K562 (cell line): ENCODE measurements at regions of chr1 and their contacts with region 1.

Region 1: GRCh38 chr1:42576935-42577334 is 81.3 kb upstream of the PPIH start:
- DNase-seq: no peak
- ATAC-seq: no peak
- H3K4me3 ChIP-seq: no peak overlapping the region
- H3K27ac ChIP-seq: no peak overlapping the region
- H3K4me1 ChIP-seq: no peaks in the 10 kb centered on the region
- H3K27me3 ChIP-seq: peaks cover 2 to 4% of the 10 kb centered on the region in 2 experiments; a peak in 1 of 5 replicates
- CTCF ChIP-seq: no peak
- EP300 ChIP-seq: no peak
- POLR2A ChIP-seq: no peak
- RAD21 ChIP-seq: no peak

Region 2: DNA sequence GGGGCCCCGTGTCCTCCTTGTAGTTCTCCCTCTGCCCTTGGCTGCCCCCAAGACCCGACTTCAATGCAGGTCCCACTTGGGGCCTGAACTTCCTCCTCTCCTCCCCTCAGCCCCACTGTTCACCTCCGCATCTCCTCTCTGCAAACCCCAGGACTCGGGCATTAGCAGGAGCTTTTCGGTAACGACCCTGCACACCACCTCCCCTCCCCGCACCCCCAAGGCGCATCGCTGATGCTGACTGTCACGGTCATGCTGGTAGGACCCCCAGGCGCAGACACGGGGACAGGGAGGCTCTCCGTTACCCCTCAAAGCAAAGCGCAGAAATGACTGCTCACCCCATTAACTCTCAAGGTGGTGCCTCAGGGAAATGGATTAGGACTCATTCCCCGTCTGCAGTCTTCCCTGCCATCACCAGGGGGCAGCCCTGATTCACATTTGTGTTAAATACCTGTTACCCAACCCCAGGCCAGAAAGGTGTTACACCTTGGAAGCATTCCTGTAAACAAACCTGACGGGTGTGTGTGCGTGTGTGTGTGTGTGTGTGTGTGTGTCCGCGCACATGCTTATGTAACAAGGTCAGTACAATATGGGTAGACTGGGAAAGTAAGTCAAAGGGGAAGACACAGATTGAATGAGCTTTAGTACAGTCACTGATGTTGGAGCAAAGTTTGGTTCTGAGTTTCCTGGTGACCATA is 430.2 kb before region 1 on chr1:
- CTCF ChIA-PET with region 1: no interaction called
- POLR2A ChIA-PET with region 1: no interaction called
- in situ Hi-C with region 1: no loop called
- intact Hi-C with region 1: loop called (anchors 5 kb)
- DNase-seq: peak; percentile 75 to 79 (median 76)
- ATAC-seq: peak; percentile 94
- H3K4me3 ChIP-seq: no peak overlapping the region
- H3K27ac ChIP-seq: no peak overlapping the region
- H3K4me1 ChIP-seq: peaks cover 0 to 4% of the 10 kb centered on the region in 2 experiments; a peak in 1 of 5 replicates
- H3K27me3 ChIP-seq: peaks cover 21 to 60% of the 10 kb centered on the region in 2 experiments
- CTCF ChIP-seq: peak; percentile 80 to 95 (median 91)
- EP300 ChIP-seq: no peak
- POLR2A ChIP-seq: no peak
- RAD21 ChIP-seq: peak; percentile 73 to 95

Region 3: DNA sequence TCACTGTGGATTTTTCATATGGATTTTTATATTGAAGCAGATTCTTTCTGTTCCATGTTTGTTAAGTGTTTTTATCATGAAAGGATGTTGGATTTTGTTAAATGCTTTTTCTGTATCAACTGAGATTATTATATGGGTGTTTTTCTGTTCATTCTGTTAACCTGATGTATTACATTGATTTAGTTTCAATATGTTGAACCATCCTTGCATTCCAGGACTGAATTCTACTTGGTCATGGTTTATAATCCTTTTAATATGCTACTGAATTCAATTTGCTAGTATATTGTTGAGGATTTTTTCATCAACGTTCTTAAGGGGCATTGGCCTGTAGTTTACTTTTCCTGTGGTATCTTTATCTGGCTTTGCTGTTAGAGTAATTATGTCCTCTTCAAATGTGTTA is 58.0 kb before region 1 on chr1:
- CTCF ChIA-PET with region 1: no interaction called
- POLR2A ChIA-PET with region 1: no interaction called
- in situ Hi-C with region 1: no loop called
- intact Hi-C with region 1: loop called (anchors 5 kb)
- DNase-seq: no peak
- ATAC-seq: no peak
- H3K4me3 ChIP-seq: no peak overlapping the region
- H3K27ac ChIP-seq: no peak overlapping the region
- H3K4me1 ChIP-seq: no peaks in the 10 kb centered on the region
- H3K27me3 ChIP-seq: no peaks in the 10 kb centered on the region
- CTCF ChIP-seq: no peak
- EP300 ChIP-seq: no peak
- POLR2A ChIP-seq: no peak
- RAD21 ChIP-seq: no peak

Region 4: GRCh38 chr1:42747125-42747524 is 170.2 kb after region 1 on chr1:
- CTCF ChIA-PET with region 1: interaction called, 10 read pairs
- POLR2A ChIA-PET with region 1: no interaction called
- in situ Hi-C with region 1: loop called (anchors 25 kb)
- intact Hi-C with region 1: no loop called
- DNase-seq: peak; percentile 43 to 55 (median 52)
- ATAC-seq: peak; percentile 73
- H3K4me3 ChIP-seq: no peak overlapping the region
- H3K27ac ChIP-seq: no peak overlapping the region
- H3K4me1 ChIP-seq: no peaks in the 10 kb centered on the region
- H3K27me3 ChIP-seq: peaks cover 0 to 5% of the 10 kb centered on the region in 2 experiments; a peak in 1 of 5 replicates
- CTCF ChIP-seq: peak; percentile 70 to 82 (median 74)
- EP300 ChIP-seq: no peak
- POLR2A ChIP-seq: no peak
- RAD21 ChIP-seq: peak; percentile 52 to 76

Region 5: GRCh38 chr1:42766741-42767509 is 190.0 kb after region 1 on chr1 and contains the starts of genes C1orf50 and P3H1:
- CTCF ChIA-PET with region 1: no interaction called
- POLR2A ChIA-PET with region 1: no interaction called
- in situ Hi-C with region 1: no loop called
- intact Hi-C with region 1: loop called (anchors 2 kb)
- DNase-seq: peak; percentile 96 to 100 (median 96)
- ATAC-seq: peak; percentile 93
- H3K4me3 ChIP-seq: peak within 1 kb of the TSS; percentile 76
- H3K27ac ChIP-seq: peak within 1 kb of the TSS; percentile 81
- H3K4me1 ChIP-seq: peaks cover 12 to 24% of the 10 kb centered on the region in 2 experiments; a peak in 3 of 5 replicates
- H3K27me3 ChIP-seq: no peaks in the 10 kb centered on the region
- CTCF ChIP-seq: peak in 1 of 3 experiments; percentile 10; a peak in 2 of 6 replicates
- EP300 ChIP-seq: no peak; the same call in 1 of the 2 replicates
- POLR2A ChIP-seq: peak; percentile 98
- RAD21 ChIP-seq: no peak
- polyA plus RNA-seq, gene C1orf50: 0.55 to 1.8 TPM
- polyA plus RNA-seq, gene P3H1: 1.7 to 5.0 TPM

Region 6: GRCh38 chr1:43073490-43074230 is 496.7 kb after region 1 on chr1:
- CTCF ChIA-PET with region 1: interaction called, 8 read pairs
- POLR2A ChIA-PET with region 1: no interaction called
- in situ Hi-C with region 1: loop called (anchors 10 kb)
- intact Hi-C with region 1: loop called (anchors 5 kb)
- DNase-seq: peak; percentile 84 to 90 (median 85)
- ATAC-seq: peak; percentile 94
- H3K4me3 ChIP-seq: no peak overlapping the region
- H3K27ac ChIP-seq: no peak overlapping the region; the same call in 2 of the 3 replicates
- H3K4me1 ChIP-seq: peaks cover 15 to 23% of the 10 kb centered on the region in 2 experiments; a peak in 4 of 5 replicates
- H3K27me3 ChIP-seq: no peaks in the 10 kb centered on the region
- CTCF ChIP-seq: peak; percentile 90 to 96 (median 94)
- EP300 ChIP-seq: no peak
- POLR2A ChIP-seq: no peak
- RAD21 ChIP-seq: peak; percentile 99 to 100